ENCODE measurements at regions of chr11 and their contacts with region 1.

Region 1: DNA sequence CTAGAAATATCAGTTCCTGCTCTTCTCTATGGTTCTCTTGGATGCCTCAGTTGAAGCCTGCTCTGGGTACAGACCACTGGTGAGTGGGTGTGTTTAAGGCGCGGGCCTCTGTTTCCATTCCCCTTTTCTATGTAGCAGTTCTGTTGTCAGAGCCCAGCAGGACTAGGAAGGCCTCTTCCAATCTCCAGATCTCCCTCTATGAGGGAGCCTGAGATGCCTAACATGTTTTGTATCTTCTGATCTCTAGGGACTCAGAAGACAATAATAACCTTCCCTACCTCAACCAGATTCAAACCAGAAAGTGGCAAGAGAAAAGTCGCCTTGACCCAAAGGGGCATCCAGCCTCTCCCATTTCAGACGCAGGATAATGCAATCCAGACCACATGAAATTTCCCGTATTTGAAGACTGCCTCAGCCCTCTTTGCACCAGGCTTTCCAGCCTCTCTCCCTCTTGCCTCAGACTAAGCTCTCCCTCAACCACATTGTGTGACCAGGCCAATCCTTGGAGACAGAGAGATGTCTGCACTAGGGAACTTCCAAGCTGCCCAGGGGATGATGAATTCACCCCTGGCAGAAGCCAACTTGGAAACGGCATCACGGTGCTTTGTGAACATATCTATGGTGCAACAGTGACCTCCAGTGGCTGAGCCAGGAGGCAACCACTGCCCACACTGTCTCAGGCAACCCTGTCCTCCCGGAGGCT is 150.1 kb upstream of the UBASH3B start:
- DNase-seq: peak; percentile 88
- H3K4me3 ChIP-seq: no peak overlapping the region
- H3K27ac ChIP-seq: no peak overlapping the region
- H3K4me1 ChIP-seq: peaks cover 3% of the 10 kb centered on the region
- H3K27me3 ChIP-seq: no peaks in the 10 kb centered on the region
- CTCF ChIP-seq: peak; percentile 93

Region 2: GRCh38 chr11:121318848-121319834 is 1186.3 kb before region 1 on chr11:
- CTCF ChIA-PET with region 1: no interaction called
- POLR2A ChIA-PET with region 1: no interaction called
- intact Hi-C with region 1: loop called (anchors 10 kb)
- DNase-seq: peak; percentile 71
- H3K4me3 ChIP-seq: no peak overlapping the region
- H3K27ac ChIP-seq: no peak overlapping the region
- H3K4me1 ChIP-seq: no peaks in the 10 kb centered on the region
- H3K27me3 ChIP-seq: no peaks in the 10 kb centered on the region
- CTCF ChIP-seq: peak; percentile 86

Region 3: GRCh38 chr11:121655537-121656327 is 849.7 kb before region 1 on chr11:
- CTCF ChIA-PET with region 1: interaction called, 6 read pairs
- POLR2A ChIA-PET with region 1: no interaction called
- intact Hi-C with region 1: loop called (anchors 1 kb)
- DNase-seq: peak; percentile 97
- H3K4me3 ChIP-seq: peak overlapping the region; percentile 49
- H3K27ac ChIP-seq: peak overlapping the region; percentile 96
- H3K4me1 ChIP-seq: peaks cover 38% of the 10 kb centered on the region
- H3K27me3 ChIP-seq: no peaks in the 10 kb centered on the region
- CTCF ChIP-seq: peak; percentile 89

Region 4: DNA sequence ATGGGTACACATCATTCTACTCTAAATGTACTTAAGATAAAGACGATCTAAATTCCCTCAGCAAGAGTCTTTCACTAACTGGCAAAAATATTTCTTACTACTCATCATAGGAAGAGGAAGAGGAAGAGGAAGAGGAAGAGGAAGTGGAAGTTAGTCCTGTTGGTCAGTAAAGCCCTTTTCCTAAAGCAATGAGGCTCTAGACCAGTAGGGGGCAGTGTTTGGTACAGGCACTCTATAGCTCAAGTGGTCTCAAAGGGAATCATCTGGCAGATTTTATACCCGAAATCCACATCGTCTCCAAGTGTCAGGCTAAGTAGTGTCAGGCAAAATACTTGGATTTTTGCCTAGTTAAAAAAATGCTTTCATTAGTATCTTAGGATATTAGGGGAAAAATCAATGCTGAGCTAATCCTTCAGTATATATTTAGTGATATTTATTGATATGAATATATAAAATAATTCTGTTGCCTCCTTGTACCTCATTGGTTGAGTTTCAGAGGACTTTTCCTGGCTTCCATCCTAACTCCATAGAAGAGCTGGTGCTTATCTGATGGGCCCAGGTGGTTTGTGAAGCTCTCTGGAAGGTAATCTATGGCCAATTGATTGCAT is 397.2 kb before region 1 on chr11:
- CTCF ChIA-PET with region 1: interaction called, 11 read pairs
- POLR2A ChIA-PET with region 1: no interaction called
- intact Hi-C with region 1: loop called (anchors 2 kb)
- DNase-seq: peak; percentile 87
- H3K4me3 ChIP-seq: no peak overlapping the region
- H3K27ac ChIP-seq: no peak overlapping the region
- H3K4me1 ChIP-seq: peaks cover 32% of the 10 kb centered on the region
- H3K27me3 ChIP-seq: no peaks in the 10 kb centered on the region
- CTCF ChIP-seq: peak; percentile 97

Region 5: GRCh38 chr11:122293296-122294023 is 212.0 kb before region 1 on chr11:
- CTCF ChIA-PET with region 1: no interaction called
- POLR2A ChIA-PET with region 1: no interaction called
- intact Hi-C with region 1: loop called (anchors 1 kb)
- DNase-seq: peak; percentile 37
- H3K4me3 ChIP-seq: no peak overlapping the region
- H3K27ac ChIP-seq: no peak overlapping the region
- H3K4me1 ChIP-seq: no peaks in the 10 kb centered on the region
- H3K27me3 ChIP-seq: no peaks in the 10 kb centered on the region
- CTCF ChIP-seq: peak; percentile 64

Region 6: DNA sequence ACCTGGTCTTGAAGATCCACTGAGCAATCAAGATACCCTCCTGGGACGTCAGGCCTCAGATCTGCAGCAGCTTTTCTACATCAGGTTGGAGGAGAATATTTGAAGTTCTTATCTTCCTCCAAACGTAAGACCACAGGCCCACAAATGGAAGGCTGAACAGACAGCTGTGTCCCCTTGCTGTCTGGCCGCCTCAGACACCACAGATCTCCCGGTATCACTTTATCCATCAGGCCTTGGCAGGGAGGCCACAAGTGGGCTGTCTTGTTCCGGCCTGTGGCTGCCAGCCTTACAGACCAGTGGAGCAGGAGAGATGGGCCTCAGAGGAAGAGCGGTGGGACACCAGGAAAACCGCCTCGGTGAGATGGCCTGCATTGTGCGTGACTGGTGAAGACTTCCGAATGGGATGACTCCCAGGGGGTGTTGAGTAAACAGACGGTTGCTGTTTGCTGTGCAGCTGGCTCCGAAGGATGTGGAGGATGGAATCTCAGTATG is 166.0 kb after region 1 on chr11:
- CTCF ChIA-PET with region 1: no interaction called
- POLR2A ChIA-PET with region 1: no interaction called
- intact Hi-C with region 1: no loop called
- DNase-seq: no peak
- H3K4me3 ChIP-seq: no peak overlapping the region
- H3K27ac ChIP-seq: no peak overlapping the region
- H3K4me1 ChIP-seq: peaks cover 21% of the 10 kb centered on the region
- H3K27me3 ChIP-seq: no peaks in the 10 kb centered on the region
- CTCF ChIP-seq: no peak